Activated CD8-positive, alpha-beta T cell treated with anti-CD3 and anti-CD28 coated beads for 36 hours (primary cell): ENCODE measurements at regions of chr2 and their contacts with region 1.

Region 1: GRCh38 chr2:38947240-38948239 is 57.9 kb downstream of the ARHGEF33 start:
- DNase-seq: peak; percentile 89
- ATAC-seq: peak; percentile 87
- H3K4me3 Mint-ChIP-seq: no peak overlapping the region
- H3K27ac Mint-ChIP-seq: no peak overlapping the region
- H3K4me1 Mint-ChIP-seq: no peaks in the 10 kb centered on the region
- H3K27me3 Mint-ChIP-seq: no peaks in the 10 kb centered on the region
- CTCF ChIP-seq: peak; percentile 76

Region 2: GRCh38 chr2:38818565-38818964 is 129.0 kb before region 1 on chr2:
- CTCF ChIA-PET with region 1: no interaction called
- POLR2A ChIA-PET with region 1: no interaction called
- intact Hi-C with region 1: no loop called
- DNase-seq: no peak
- ATAC-seq: no peak
- H3K4me3 Mint-ChIP-seq: no peak overlapping the region
- H3K27ac Mint-ChIP-seq: no peak overlapping the region
- H3K4me1 Mint-ChIP-seq: no peaks in the 10 kb centered on the region
- H3K27me3 Mint-ChIP-seq: no peaks in the 10 kb centered on the region
- CTCF ChIP-seq: no peak

Region 3: DNA sequence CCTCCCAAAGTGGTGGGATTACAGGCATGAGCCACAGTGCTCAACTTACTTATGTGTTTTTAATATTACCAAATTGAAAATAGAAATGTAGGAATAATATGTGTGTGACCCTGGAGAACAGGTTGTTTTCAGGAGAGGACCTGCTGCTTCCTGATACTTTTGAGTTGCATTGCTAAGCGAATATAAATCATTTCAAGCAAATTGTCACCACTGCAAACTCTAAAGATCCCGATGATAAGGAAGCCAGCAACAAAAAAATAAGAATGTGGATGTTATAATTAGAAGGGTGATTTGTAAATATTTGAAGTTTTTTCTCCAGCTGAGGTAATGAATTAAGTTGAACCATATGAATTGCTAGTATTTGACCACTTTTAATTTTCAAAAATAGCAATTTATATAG is 16.9 kb before region 1 on chr2:
- CTCF ChIA-PET with region 1: interaction called, 20 read pairs
- POLR2A ChIA-PET with region 1: no interaction called
- intact Hi-C with region 1: no loop called
- DNase-seq: no peak
- ATAC-seq: no peak
- H3K4me3 Mint-ChIP-seq: no peak overlapping the region
- H3K27ac Mint-ChIP-seq: no peak overlapping the region
- H3K4me1 Mint-ChIP-seq: peaks cover 1% of the 10 kb centered on the region
- H3K27me3 Mint-ChIP-seq: no peaks in the 10 kb centered on the region
- CTCF ChIP-seq: no peak

Region 4: GRCh38 chr2:38959938-38960608 is 12.5 kb after region 1 on chr2:
- CTCF ChIA-PET with region 1: interaction called, 13 read pairs
- POLR2A ChIA-PET with region 1: no interaction called
- intact Hi-C with region 1: no loop called
- DNase-seq: peak; percentile 78
- ATAC-seq: peak; percentile 98
- H3K4me3 Mint-ChIP-seq: peak overlapping the region; percentile 53
- H3K27ac Mint-ChIP-seq: no peak overlapping the region
- H3K4me1 Mint-ChIP-seq: no peaks in the 10 kb centered on the region
- H3K27me3 Mint-ChIP-seq: peaks cover 22% of the 10 kb centered on the region
- CTCF ChIP-seq: no peak

Region 5: DNA sequence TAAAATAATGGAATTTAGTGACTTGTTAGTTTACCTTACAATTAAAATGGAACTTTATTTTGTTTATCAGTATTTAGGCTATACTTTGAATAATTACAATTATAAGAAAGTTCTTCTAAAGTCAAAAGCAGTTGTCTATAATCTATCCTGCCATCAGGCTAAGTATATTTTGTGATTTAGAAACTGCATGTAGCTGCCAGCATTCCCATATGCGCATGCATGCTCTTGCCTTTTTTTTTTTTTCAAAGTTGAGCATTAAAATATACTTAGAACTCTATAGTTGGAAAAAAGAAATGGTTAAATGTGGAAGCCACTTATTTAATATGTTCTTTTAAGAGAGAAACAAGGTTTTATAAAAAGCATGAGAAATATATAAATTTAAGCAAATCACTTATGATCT is 41.2 kb after region 1 on chr2:
- CTCF ChIA-PET with region 1: interaction called, 11 read pairs
- POLR2A ChIA-PET with region 1: no interaction called
- intact Hi-C with region 1: no loop called
- DNase-seq: no peak
- ATAC-seq: no peak
- H3K4me3 Mint-ChIP-seq: no peak overlapping the region
- H3K27ac Mint-ChIP-seq: no peak overlapping the region
- H3K4me1 Mint-ChIP-seq: peaks cover 3% of the 10 kb centered on the region
- H3K27me3 Mint-ChIP-seq: no peaks in the 10 kb centered on the region
- CTCF ChIP-seq: no peak

Region 6: GRCh38 chr2:39020383-39020782 is 72.8 kb after region 1 on chr2:
- CTCF ChIA-PET with region 1: interaction called, 10 read pairs
- POLR2A ChIA-PET with region 1: no interaction called
- intact Hi-C with region 1: no loop called
- DNase-seq: no peak
- ATAC-seq: no peak
- H3K4me3 Mint-ChIP-seq: no peak overlapping the region
- H3K27ac Mint-ChIP-seq: no peak overlapping the region
- H3K4me1 Mint-ChIP-seq: peaks cover 2% of the 10 kb centered on the region
- H3K27me3 Mint-ChIP-seq: no peaks in the 10 kb centered on the region
- CTCF ChIP-seq: no peak

Region 7: DNA sequence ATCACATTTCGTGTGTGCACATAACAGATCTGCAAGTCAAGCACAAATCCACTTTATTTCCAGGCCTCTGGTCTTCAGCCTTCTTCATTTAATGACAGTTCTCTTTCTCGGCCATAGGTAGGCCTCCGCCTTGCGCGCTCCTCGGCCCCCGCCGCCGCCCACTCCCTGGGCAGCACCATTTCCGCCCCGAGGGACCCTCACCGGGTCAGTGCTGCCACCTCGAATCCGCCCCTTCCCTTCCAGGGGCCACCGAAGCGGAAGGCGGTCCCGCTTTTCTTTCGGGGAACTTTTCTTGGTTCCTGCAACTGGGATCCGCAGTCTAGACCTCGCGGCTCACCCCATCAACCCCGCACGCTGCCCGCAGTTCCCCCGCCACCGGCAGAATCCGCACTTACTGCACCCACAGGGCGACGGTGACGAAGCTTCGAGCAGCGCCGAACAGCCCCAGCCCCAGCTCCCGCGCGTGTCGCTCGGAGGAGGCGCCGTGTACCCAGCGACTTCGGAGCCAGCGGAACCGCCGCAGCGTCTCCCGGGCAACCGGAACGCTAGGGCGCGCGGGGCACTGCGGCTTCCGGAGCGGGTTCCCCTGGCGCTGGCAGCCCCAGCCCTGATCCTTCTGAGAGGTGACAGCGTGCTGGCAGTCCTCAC is 296.1 kb after region 1 on chr2 and contains the start of gene CDKL4:
- CTCF ChIA-PET with region 1: interaction called, 13 read pairs
- POLR2A ChIA-PET with region 1: no interaction called
- intact Hi-C with region 1: no loop called
- DNase-seq: peak; percentile 26
- ATAC-seq: peak; percentile 40
- H3K4me3 Mint-ChIP-seq: peak within 1 kb of the TSS; percentile 72
- H3K27ac Mint-ChIP-seq: peak within 1 kb of the TSS; percentile 31
- H3K4me1 Mint-ChIP-seq: peaks cover 18% of the 10 kb centered on the region
- H3K27me3 Mint-ChIP-seq: no peaks in the 10 kb centered on the region
- CTCF ChIP-seq: no peak
- total RNA-seq, gene CDKL4: 0.29 TPM in 1 of 2 experiments, not detected in the other

Region 8: GRCh38 chr2:39368846-39369245 is 421.3 kb after region 1 on chr2:
- CTCF ChIA-PET with region 1: no interaction called
- POLR2A ChIA-PET with region 1: no interaction called
- intact Hi-C with region 1: no loop called
- DNase-seq: no peak
- ATAC-seq: peak; percentile 30
- H3K4me3 Mint-ChIP-seq: no peak overlapping the region
- H3K27ac Mint-ChIP-seq: no peak overlapping the region
- H3K4me1 Mint-ChIP-seq: peaks cover 7% of the 10 kb centered on the region
- H3K27me3 Mint-ChIP-seq: no peaks in the 10 kb centered on the region
- CTCF ChIP-seq: no peak